Dorsolateral prefrontal cortex (tissue), 120 donors: ENCODE measurements at regions of chr14 and their contacts with region 1.

Region 1: DNA sequence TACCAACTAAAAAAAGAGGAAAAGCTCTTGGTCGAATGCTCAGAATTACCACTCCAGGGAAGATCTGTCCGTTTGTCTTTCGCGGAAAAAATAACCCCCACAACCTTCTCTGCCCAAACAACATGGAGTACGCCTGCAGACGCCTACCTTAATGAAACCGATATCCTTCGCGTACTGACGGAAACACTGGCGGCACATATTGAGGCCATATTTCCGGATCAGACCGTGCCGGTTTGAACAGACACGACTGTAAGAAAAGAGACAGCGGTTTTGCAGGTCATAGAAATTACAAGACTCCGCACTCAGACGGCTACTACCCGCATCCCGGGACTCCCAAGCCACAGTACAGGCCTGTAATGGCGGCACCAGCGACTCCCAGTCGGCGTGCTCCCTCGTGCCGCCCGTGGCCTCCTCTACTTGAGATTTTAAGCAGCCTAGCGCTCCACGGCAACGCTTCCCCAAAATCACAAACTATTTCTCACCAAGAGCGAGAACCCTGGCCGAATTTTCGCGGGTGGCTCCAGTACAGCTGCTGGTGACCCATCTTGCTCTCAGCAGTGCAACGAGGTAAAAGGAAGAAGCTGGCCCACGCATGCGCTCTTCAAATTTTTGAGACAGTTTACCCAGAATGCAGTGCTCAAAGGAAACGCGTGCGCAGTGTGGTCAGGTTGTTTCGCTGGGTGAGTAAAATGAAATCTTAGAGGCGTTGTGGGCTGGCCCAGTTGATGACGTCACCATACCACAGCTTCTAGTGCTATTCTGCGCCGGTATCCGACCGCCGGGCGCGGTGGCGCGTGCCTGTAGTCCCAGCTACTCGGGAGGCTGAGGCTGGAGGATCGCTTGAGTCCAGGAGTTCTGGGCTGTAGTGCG is at the start of gene RPS29:
- DNase-seq: peak; percentile 86 to 97 (median 94)
- H3K4me3 ChIP-seq: peak within 1 kb of the TSS; percentile 65 to 100 (median 95)
- H3K27ac ChIP-seq: peak within 1 kb of the TSS; percentile 59 to 97 (median 89)
- H3K27me3 ChIP-seq: no peaks in the 10 kb centered on the region
- CTCF ChIP-seq: peak in 3 of 56 donors; percentile 5 to 33 (median 17)
- total RNA-seq, gene RPS29: 199 to 551 (median 360) TPM

Region 2: GRCh38 chr14:49574038-49574437 is 12.0 kb before region 1 on chr14:
- intact Hi-C with region 1: no loop called
- DNase-seq: no peak
- H3K4me3 ChIP-seq: no peak overlapping the region
- H3K27ac ChIP-seq: no peak overlapping the region
- H3K27me3 ChIP-seq: no peaks in the 10 kb centered on the region
- CTCF ChIP-seq: no peak

Region 3: GRCh38 chr14:49598485-49599300 is 12.7 kb after region 1 on chr14 and contains the start of gene LRR1:
- intact Hi-C with region 1: loop called in 1 of 2 experiments (anchors 1 kb)
- DNase-seq: peak; percentile 66 to 87 (median 79)
- H3K4me3 ChIP-seq: peak within 1 kb of the TSS; percentile 64 to 97 (median 88)
- H3K27ac ChIP-seq: peak within 1 kb of the TSS; percentile 15 to 98 (median 91)
- H3K27me3 ChIP-seq: no peaks in the 10 kb centered on the region
- CTCF ChIP-seq: peak in 30 of 56 donors; percentile 6 to 45 (median 24)
- total RNA-seq, gene LRR1: 0.89 to 10.9 (median 3.8) TPM

Region 4: GRCh38 chr14:49620182-49621113 is 34.4 kb after region 1 on chr14 and contains the starts of genes MGAT2 and RPL36AL:
- intact Hi-C with region 1: loop called (anchors 2 to 5 kb)
- DNase-seq: peak; percentile 97 to 99 (median 98)
- H3K4me3 ChIP-seq: peak within 1 kb of the TSS; percentile 64 to 100 (median 92)
- H3K27ac ChIP-seq: peak within 1 kb of the TSS; percentile 66 to 99 (median 93)
- H3K27me3 ChIP-seq: no peaks in the 10 kb centered on the region
- CTCF ChIP-seq: peak in 48 of 56 donors; percentile 7 to 65 (median 42)
- total RNA-seq, gene MGAT2: 6.7 to 13.7 (median 10.6) TPM
- total RNA-seq, gene RPL36AL: 70.0 to 141 (median 96.5) TPM